ENCODE measurements at regions of chr12 and their contacts with region 1.

Region 1: GRCh38 chr12:27652174-27652763 is 44.0 kb upstream of the REP15 start:
- DNase-seq: peak; percentile 63
- H3K4me3 ChIP-seq: no peak overlapping the region
- H3K27ac ChIP-seq: no peak overlapping the region
- H3K27me3 ChIP-seq: no peaks in the 10 kb centered on the region
- CTCF ChIP-seq: peak; percentile 91

Region 2: GRCh38 chr12:27018071-27018470 is 634.2 kb before region 1 on chr12:
- CTCF ChIA-PET with region 1: no interaction called
- POLR2A ChIA-PET with region 1: no interaction called
- DNase-seq: no peak
- H3K4me3 ChIP-seq: no peak overlapping the region
- H3K27ac ChIP-seq: no peak overlapping the region
- H3K27me3 ChIP-seq: no peaks in the 10 kb centered on the region
- CTCF ChIP-seq: no peak

Region 3: GRCh38 chr12:27541031-27541719 is 111.1 kb before region 1 on chr12:
- CTCF ChIA-PET with region 1: no interaction called
- POLR2A ChIA-PET with region 1: no interaction called
- DNase-seq: no peak
- H3K4me3 ChIP-seq: no peak overlapping the region
- H3K27ac ChIP-seq: no peak overlapping the region
- H3K27me3 ChIP-seq: no peaks in the 10 kb centered on the region
- CTCF ChIP-seq: no peak

Region 4: GRCh38 chr12:27667540-27667939 is 15.3 kb after region 1 on chr12:
- CTCF ChIA-PET with region 1: interaction called, 10 read pairs
- POLR2A ChIA-PET with region 1: no interaction called
- DNase-seq: no peak
- H3K4me3 ChIP-seq: no peak overlapping the region
- H3K27ac ChIP-seq: no peak overlapping the region
- H3K27me3 ChIP-seq: no peaks in the 10 kb centered on the region
- CTCF ChIP-seq: no peak